Ovary (tissue), 10 donors: ENCODE measurements at regions of chr3 and their contacts with region 1.

Region 1: GRCh38 chr3:186694288-186695032 is 22.7 kb upstream of the KNG1 start:
- DNase-seq: no peak
- H3K4me3 ChIP-seq: no peak overlapping the region
- H3K27ac ChIP-seq: no peak overlapping the region
- H3K4me1 ChIP-seq: no peaks in the 10 kb centered on the region
- H3K27me3 ChIP-seq: no peaks in the 10 kb centered on the region
- CTCF ChIP-seq: no peak
- EP300 ChIP-seq: no peak
- POLR2A ChIP-seq: no peak

Region 2: DNA sequence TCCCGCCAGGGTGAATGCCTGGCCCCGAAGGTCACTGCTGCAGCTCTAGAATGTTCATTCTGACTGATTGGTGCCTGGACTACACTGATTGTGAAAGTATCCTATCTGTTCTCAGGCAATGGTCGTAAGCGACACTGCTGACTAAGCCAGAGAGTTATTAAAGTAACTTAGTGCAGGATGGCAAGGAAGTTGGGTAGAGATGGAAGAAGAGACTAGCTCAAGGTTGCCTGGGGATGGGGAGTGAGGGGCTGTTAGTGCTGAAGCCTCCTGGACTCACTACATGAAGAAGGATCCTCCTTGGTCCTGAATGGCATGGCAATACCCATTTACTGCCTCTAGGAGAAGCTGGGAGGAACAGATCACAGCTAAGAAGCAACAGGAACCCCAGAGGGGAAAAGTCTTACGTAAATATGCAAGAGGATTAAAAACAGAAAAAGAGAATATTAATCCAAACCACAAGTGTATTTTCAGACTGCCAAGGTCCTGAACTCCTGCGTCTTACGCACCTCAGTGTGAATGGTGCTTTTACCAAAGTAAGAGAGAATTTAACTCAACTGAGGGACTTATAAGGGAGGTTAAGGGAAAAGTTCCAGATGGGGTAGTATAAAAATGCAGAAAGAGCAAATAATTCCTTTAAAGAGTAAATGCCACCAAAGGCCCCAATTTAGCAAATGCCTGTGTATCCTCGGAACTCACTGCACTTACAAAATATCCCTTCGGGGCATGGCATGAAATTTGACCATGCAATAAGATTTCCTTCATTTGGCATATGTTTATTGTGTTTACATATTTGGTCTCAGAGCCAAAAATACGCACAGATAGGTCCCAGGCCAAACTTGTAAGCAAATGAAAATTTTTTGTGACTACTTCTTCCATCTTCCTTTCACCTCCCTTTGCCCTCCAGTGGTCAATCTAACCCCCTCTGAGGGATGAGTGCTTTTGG is 268.4 kb before region 1 on chr3:
- intact Hi-C with region 1: no loop called
- DNase-seq: no peak
- H3K4me3 ChIP-seq: no peak overlapping the region
- H3K27ac ChIP-seq: peak overlapping the region; percentile 20 to 52
- H3K4me1 ChIP-seq: peaks cover 2% of the 10 kb centered on the region
- H3K27me3 ChIP-seq: no peaks in the 10 kb centered on the region
- CTCF ChIP-seq: peak in 1 of 3 donors; percentile 38
- EP300 ChIP-seq: no peak
- POLR2A ChIP-seq: no peak

Region 3: DNA sequence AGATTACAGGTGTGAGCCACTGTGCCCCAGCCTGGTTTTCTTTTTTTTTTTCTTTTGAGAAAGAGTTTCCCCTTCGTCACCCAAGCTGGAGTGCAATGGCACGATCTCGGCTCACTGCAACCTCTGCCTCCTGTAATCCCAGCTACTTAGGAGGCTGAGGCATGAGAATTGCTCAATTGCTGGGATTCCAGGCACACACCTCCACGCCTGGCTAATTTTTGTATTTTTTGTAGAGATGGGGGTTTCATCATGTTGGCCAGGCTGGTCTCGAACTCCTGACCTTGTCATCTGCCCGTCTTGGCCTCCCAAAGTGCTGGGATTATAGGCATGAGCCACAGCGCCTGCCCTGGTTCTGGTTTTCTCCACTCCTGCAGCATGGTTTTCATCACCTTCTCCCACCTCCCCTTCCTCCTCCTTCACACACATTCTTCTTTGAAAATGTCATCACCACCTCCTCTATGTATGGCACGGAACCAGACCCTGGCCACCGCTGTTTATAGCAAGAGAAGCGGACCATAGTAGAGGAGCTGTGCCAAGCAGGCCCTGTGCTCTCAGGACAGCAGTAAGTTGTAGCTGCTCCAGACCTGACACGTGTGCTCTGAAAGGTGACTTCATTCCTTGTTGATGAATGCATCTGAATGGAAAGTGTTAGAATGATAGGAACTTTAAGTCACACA is 96.2 kb before region 1 on chr3:
- intact Hi-C with region 1: no loop called
- DNase-seq: no peak
- H3K4me3 ChIP-seq: no peak overlapping the region
- H3K27ac ChIP-seq: no peak overlapping the region
- H3K4me1 ChIP-seq: no peaks in the 10 kb centered on the region
- H3K27me3 ChIP-seq: no peaks in the 10 kb centered on the region
- CTCF ChIP-seq: no peak
- EP300 ChIP-seq: no peak
- POLR2A ChIP-seq: no peak

Region 4: GRCh38 chr3:188194332-188194731 is 1499.9 kb after region 1 on chr3:
- intact Hi-C with region 1: loop called in 1 of 4 experiments (anchors 5 kb)
- DNase-seq: no peak
- H3K4me3 ChIP-seq: no peak overlapping the region
- H3K27ac ChIP-seq: no peak overlapping the region
- H3K4me1 ChIP-seq: peaks cover 8% of the 10 kb centered on the region
- H3K27me3 ChIP-seq: no peaks in the 10 kb centered on the region
- CTCF ChIP-seq: no peak
- EP300 ChIP-seq: no peak
- POLR2A ChIP-seq: no peak